Colonic mucosa (tissue), 4 donors: ENCODE measurements at regions of chr9 and their contacts with region 1.

Region 1: GRCh38 chr9:110152704-110153374 is 55.1 kb downstream of the C9orf152 start:
- DNase-seq: peak; percentile 37
- H3K4me3 ChIP-seq: no peak overlapping the region
- H3K27ac ChIP-seq: no peak overlapping the region
- H3K4me1 ChIP-seq: no peaks in the 10 kb centered on the region
- H3K27me3 ChIP-seq: no peaks in the 10 kb centered on the region
- CTCF ChIP-seq: peak; percentile 68

Region 2: GRCh38 chr9:109574068-109574882 is 578.6 kb before region 1 on chr9:
- intact Hi-C with region 1: loop called (anchors 10 kb)
- DNase-seq: peak; percentile 47
- H3K4me3 ChIP-seq: no peak overlapping the region
- H3K27ac ChIP-seq: no peak overlapping the region
- H3K4me1 ChIP-seq: no peaks in the 10 kb centered on the region
- H3K27me3 ChIP-seq: no peaks in the 10 kb centered on the region
- CTCF ChIP-seq: peak; percentile 38

Region 3: GRCh38 chr9:109817846-109818472 is 334.9 kb before region 1 on chr9:
- intact Hi-C with region 1: no loop called
- DNase-seq: peak; percentile 76
- H3K4me3 ChIP-seq: no peak overlapping the region
- H3K27ac ChIP-seq: no peak overlapping the region
- H3K4me1 ChIP-seq: no peaks in the 10 kb centered on the region
- H3K27me3 ChIP-seq: no peaks in the 10 kb centered on the region
- CTCF ChIP-seq: peak; percentile 79

Region 4: GRCh38 chr9:109843641-109844040 is 309.2 kb before region 1 on chr9:
- intact Hi-C with region 1: no loop called
- DNase-seq: no peak
- H3K4me3 ChIP-seq: no peak overlapping the region
- H3K27ac ChIP-seq: no peak overlapping the region
- H3K4me1 ChIP-seq: no peaks in the 10 kb centered on the region
- H3K27me3 ChIP-seq: no peaks in the 10 kb centered on the region
- CTCF ChIP-seq: no peak

Region 5: GRCh38 chr9:109903515-109904138 is 249.2 kb before region 1 on chr9:
- intact Hi-C with region 1: loop called (anchors 2 kb)
- DNase-seq: peak; percentile 76
- H3K4me3 ChIP-seq: no peak overlapping the region
- H3K27ac ChIP-seq: no peak overlapping the region
- H3K4me1 ChIP-seq: peaks cover 13% of the 10 kb centered on the region
- H3K27me3 ChIP-seq: no peaks in the 10 kb centered on the region
- CTCF ChIP-seq: peak; percentile 79

Region 6: DNA sequence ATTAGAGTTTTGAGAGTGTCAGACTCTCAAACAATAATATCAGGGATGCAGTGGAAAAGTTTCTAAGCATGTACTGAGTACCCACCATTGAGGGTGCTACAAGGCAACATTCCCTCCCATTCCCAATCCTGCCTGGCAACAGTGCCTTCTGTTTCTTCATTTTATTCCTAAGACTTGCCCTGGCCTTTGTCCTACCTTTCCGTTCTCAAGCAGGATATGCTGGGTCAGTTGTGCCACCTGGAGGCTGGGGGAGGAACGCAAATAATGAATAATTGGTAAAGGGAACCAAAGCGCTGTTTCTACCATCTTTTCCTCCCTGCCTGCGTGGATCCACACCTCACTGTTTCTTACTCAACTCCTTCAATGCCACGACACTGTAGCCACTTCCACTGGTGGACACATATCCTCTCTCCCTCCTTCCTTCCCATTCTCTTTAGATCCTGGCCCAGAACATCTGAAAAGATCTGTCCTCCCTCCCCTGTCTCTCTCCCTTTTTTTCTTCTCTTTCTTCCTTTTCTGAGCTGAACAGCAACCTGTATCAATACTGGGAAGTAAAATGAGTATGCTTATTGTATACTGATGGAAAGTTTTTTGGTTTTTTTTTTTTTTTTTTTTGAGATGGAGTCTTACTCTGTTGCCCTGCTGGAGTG is 94.4 kb before region 1 on chr9:
- intact Hi-C with region 1: loop called (anchors 5 kb)
- DNase-seq: peak; percentile 78
- H3K4me3 ChIP-seq: no peak overlapping the region
- H3K27ac ChIP-seq: no peak overlapping the region
- H3K4me1 ChIP-seq: no peaks in the 10 kb centered on the region
- H3K27me3 ChIP-seq: no peaks in the 10 kb centered on the region
- CTCF ChIP-seq: peak; percentile 52

Region 7: GRCh38 chr9:110069326-110070248 is 83.3 kb before region 1 on chr9:
- intact Hi-C with region 1: loop called (anchors 5 kb)
- DNase-seq: no peak
- H3K4me3 ChIP-seq: no peak overlapping the region
- H3K27ac ChIP-seq: no peak overlapping the region
- H3K4me1 ChIP-seq: no peaks in the 10 kb centered on the region
- H3K27me3 ChIP-seq: no peaks in the 10 kb centered on the region
- CTCF ChIP-seq: no peak

Region 8: GRCh38 chr9:110116543-110116885 is 36.3 kb before region 1 on chr9:
- intact Hi-C with region 1: no loop called
- DNase-seq: no peak
- H3K4me3 ChIP-seq: no peak overlapping the region
- H3K27ac ChIP-seq: no peak overlapping the region
- H3K4me1 ChIP-seq: no peaks in the 10 kb centered on the region
- H3K27me3 ChIP-seq: no peaks in the 10 kb centered on the region
- CTCF ChIP-seq: no peak

Region 9: GRCh38 chr9:110241260-110241857 is 88.5 kb after region 1 on chr9:
- intact Hi-C with region 1: no loop called
- DNase-seq: no peak
- H3K4me3 ChIP-seq: no peak overlapping the region
- H3K27ac ChIP-seq: no peak overlapping the region
- H3K4me1 ChIP-seq: no peaks in the 10 kb centered on the region
- H3K27me3 ChIP-seq: no peaks in the 10 kb centered on the region
- CTCF ChIP-seq: no peak